Naive thymus-derived CD4-positive, alpha-beta T cell (primary cell): ENCODE measurements at regions of chr3 and their contacts with region 1.

Region 1: DNA sequence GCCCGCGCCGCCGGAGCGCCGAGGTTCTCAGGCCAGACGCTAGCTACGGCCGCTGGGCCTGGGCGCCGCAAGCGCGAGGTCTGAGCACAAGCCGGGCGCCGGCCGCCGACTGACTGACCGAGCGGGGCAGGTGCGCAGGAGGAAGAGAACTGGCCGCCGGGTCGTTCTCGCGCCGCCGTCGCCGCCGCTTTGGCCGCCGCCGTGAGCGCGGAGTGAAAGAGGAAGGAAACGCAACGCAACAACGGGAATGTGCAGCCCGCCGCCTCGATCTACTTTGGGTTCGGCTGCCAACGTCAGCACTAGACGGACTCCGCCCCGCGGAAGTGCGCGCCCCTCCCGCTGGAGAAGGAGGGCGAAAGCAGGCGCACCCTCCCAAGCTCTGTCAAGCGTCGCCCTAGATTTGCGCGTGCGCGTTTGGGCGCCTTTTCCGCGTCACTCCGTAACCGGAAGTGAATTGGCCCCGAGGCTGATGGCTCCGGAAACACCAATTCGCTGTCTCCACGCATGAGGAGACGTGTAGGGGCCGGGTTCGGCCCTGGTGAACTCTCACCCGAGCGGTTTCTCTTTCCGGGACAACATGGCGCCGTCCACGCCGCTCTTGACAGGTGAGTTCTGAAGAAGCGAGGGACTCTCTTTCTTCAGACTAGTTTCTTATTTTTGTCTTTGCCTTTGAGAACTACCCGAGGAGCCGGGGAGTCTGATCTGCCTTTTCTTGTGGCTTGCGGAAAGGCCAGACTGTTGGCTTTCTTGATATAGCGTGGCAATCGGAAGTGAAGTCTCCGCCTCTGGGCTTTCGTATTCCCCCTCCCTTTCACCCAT is at the starts of genes EIF2A and SERP1:
- DNase-seq: peak; percentile 97 to 100 (median 100)
- ATAC-seq: peak; percentile 94
- H3K4me3 ChIP-seq: peak within 1 kb of the TSS; percentile 78
- H3K4me3 Mint-ChIP-seq: peak within 1 kb of the TSS; percentile 88 to 99 (median 96)
- H3K27ac ChIP-seq: peak within 1 kb of the TSS; percentile 96
- H3K27ac Mint-ChIP-seq: peak within 1 kb of the TSS; percentile 93 to 100 (median 98)
- H3K4me1 ChIP-seq: peaks cover 15 to 23% of the 10 kb centered on the region in 2 donors
- H3K4me1 Mint-ChIP-seq: peaks cover 34 to 84% (median 79%) of the 10 kb centered on the region in 7 donors
- H3K27me3 ChIP-seq: no peaks in the 10 kb centered on the region
- H3K27me3 Mint-ChIP-seq: no peaks in the 10 kb centered on the region
- total RNA-seq, gene EIF2A: 94.7 to 135 (median 105) TPM
- total RNA-seq, gene SERP1: 89.4 to 120 (median 115) TPM

Region 2: DNA sequence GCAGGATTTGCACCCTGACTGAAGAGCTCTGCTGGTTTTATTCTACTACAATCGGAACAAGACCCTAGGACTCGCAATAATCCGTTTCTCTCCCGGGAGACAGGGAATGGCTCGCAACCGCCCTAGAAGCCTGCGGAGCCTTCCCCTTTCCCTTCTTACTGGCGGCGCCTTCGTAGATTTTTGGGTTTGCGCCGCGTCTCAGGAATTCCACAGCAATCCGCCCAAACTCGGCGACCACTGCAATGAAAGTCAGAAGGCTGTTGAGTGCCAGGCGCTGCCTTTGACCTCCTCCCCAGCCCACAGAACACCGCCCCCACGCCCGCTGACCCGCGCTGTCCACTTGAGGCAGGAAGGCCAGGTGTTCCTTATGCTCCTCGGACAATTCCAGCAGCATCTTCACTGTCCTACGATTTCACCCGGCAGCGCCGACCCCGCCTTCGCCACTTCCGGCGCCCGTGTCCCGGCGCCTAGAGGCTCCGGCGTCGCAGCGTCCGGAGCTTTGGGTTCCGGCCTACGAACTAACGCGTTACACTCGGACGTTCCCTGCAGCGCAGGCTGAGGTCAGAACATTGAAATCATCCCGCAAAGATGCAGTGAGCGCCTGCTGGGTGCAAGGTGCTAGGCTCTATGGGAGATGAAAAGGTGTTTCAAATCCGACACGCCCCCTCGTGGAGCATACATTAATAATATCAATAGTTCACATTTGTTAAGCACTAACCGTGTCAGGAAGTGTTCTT is 794.2 kb before region 1 on chr3 and contains the start of gene COMMD2:
- CTCF ChIA-PET with region 1: no interaction called
- POLR2A ChIA-PET with region 1: no interaction called
- intact Hi-C with region 1: loop called in 1 of 2 experiments (anchors 1 kb)
- DNase-seq: peak; percentile 52 to 76 (median 63)
- ATAC-seq: peak; percentile 91
- H3K4me3 ChIP-seq: peak within 1 kb of the TSS; percentile 81
- H3K4me3 Mint-ChIP-seq: peak within 1 kb of the TSS; percentile 94 to 98 (median 96)
- H3K27ac ChIP-seq: peak within 1 kb of the TSS; percentile 73
- H3K27ac Mint-ChIP-seq: peak within 1 kb of the TSS; percentile 90 to 97 (median 96)
- H3K4me1 ChIP-seq: peaks cover 9 to 20% of the 10 kb centered on the region in 2 donors
- H3K4me1 Mint-ChIP-seq: peaks cover 12 to 56% (median 32%) of the 10 kb centered on the region in 7 donors
- H3K27me3 ChIP-seq: no peaks in the 10 kb centered on the region
- H3K27me3 Mint-ChIP-seq: peaks cover 0 to 2% (median 0%) of the 10 kb centered on the region in 5 donors
- total RNA-seq, gene COMMD2: 29.9 to 44.4 (median 33.4) TPM

Region 3: DNA sequence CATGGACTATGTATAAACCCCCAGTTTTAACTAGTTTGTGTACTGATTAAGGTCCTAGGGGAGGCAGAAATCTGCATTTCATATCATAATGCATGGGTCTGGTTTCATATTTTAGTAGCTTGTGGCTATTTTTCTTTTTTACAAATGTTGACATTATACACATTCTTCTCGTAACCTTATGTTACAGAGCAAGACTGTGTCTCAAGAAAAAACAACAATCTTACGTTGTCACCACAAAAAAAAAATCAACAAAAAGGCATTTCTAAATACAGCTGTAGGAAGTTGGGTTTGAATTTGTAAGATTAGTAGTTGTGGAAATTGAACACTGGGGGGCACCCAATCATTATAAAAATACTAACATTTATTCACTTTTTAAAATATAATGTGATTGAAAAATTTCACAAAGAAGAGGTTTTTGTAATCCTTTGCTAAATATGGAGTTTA is 18.1 kb before region 1 on chr3:
- CTCF ChIA-PET with region 1: no interaction called
- POLR2A ChIA-PET with region 1: interaction called, 10 read pairs
- intact Hi-C with region 1: loop called (anchors 1 kb)
- DNase-seq: peak in 4 of 9 donors; percentile 23 to 37 (median 28)
- ATAC-seq: peak; percentile 42
- H3K4me3 ChIP-seq: no peak overlapping the region
- H3K4me3 Mint-ChIP-seq: no peak overlapping the region
- H3K27ac ChIP-seq: no peak overlapping the region
- H3K27ac Mint-ChIP-seq: no peak overlapping the region
- H3K4me1 ChIP-seq: no peaks in the 10 kb centered on the region
- H3K4me1 Mint-ChIP-seq: peaks cover 0 to 8% (median 5%) of the 10 kb centered on the region in 7 donors
- H3K27me3 ChIP-seq: no peaks in the 10 kb centered on the region
- H3K27me3 Mint-ChIP-seq: peaks cover 0 to 21% (median 0%) of the 10 kb centered on the region in 5 donors

Region 4: DNA sequence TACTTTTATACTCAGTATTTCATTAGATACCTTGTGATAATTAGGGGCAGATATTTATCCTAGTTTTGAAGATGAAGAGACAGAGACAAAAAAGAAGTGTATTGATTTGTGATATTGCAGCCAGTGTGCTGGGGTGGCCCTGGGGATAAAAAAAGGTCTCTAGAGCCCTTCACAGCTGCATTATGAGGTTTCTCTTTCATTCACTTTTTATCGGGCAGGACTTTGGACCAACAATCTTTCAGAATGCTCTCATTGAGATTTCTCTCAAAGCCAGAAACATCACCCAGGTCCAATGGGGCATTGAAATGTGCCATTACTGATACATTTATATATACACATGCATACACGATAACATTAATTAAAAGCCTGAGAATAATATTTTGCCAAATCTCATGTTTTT is 36.2 kb after region 1 on chr3:
- CTCF ChIA-PET with region 1: no interaction called
- POLR2A ChIA-PET with region 1: interaction called, 4 read pairs
- intact Hi-C with region 1: loop called in 1 of 2 experiments (anchors 2 kb)
- DNase-seq: no peak
- ATAC-seq: no peak
- H3K4me3 ChIP-seq: no peak overlapping the region
- H3K4me3 Mint-ChIP-seq: peak overlapping the region in 1 of 10 donors; percentile 20
- H3K27ac ChIP-seq: no peak overlapping the region
- H3K27ac Mint-ChIP-seq: peak overlapping the region in 3 of 9 donors; percentile 5 to 38 (median 25)
- H3K4me1 ChIP-seq: no peaks in the 10 kb centered on the region
- H3K4me1 Mint-ChIP-seq: peaks cover 0 to 19% (median 0%) of the 10 kb centered on the region in 7 donors
- H3K27me3 ChIP-seq: no peaks in the 10 kb centered on the region
- H3K27me3 Mint-ChIP-seq: no peaks in the 10 kb centered on the region

Region 5: GRCh38 chr3:150691414-150692040 is 145.1 kb after region 1 on chr3:
- CTCF ChIA-PET with region 1: no interaction called
- POLR2A ChIA-PET with region 1: no interaction called
- intact Hi-C with region 1: no loop called
- DNase-seq: no peak
- ATAC-seq: no peak
- H3K4me3 ChIP-seq: no peak overlapping the region
- H3K4me3 Mint-ChIP-seq: no peak overlapping the region
- H3K27ac ChIP-seq: no peak overlapping the region
- H3K27ac Mint-ChIP-seq: no peak overlapping the region
- H3K4me1 ChIP-seq: no peaks in the 10 kb centered on the region
- H3K4me1 Mint-ChIP-seq: no peaks in the 10 kb centered on the region
- H3K27me3 ChIP-seq: no peaks in the 10 kb centered on the region
- H3K27me3 Mint-ChIP-seq: peaks cover 0 to 9% (median 0%) of the 10 kb centered on the region in 5 donors

Region 6: GRCh38 chr3:150703299-150704134 is 157.1 kb after region 1 on chr3 and contains the start of gene ERICH6:
- CTCF ChIA-PET with region 1: no interaction called
- POLR2A ChIA-PET with region 1: interaction called, 6 read pairs
- intact Hi-C with region 1: loop called (anchors 1 kb)
- DNase-seq: peak; percentile 59 to 83 (median 71)
- ATAC-seq: peak; percentile 93
- H3K4me3 ChIP-seq: peak within 1 kb of the TSS; percentile 94
- H3K4me3 Mint-ChIP-seq: peak within 1 kb of the TSS; percentile 82 to 98 (median 97)
- H3K27ac ChIP-seq: peak within 1 kb of the TSS; percentile 84
- H3K27ac Mint-ChIP-seq: peak within 1 kb of the TSS; percentile 93 to 100 (median 97)
- H3K4me1 ChIP-seq: peaks cover 4 to 5% of the 10 kb centered on the region in 2 donors
- H3K4me1 Mint-ChIP-seq: peaks cover 11 to 24% (median 20%) of the 10 kb centered on the region in 7 donors
- H3K27me3 ChIP-seq: no peaks in the 10 kb centered on the region
- H3K27me3 Mint-ChIP-seq: peaks cover 0 to 6% (median 0%) of the 10 kb centered on the region in 5 donors
- total RNA-seq, gene ERICH6: 0.24 to 1.4 (median 0.53) TPM

Region 7: DNA sequence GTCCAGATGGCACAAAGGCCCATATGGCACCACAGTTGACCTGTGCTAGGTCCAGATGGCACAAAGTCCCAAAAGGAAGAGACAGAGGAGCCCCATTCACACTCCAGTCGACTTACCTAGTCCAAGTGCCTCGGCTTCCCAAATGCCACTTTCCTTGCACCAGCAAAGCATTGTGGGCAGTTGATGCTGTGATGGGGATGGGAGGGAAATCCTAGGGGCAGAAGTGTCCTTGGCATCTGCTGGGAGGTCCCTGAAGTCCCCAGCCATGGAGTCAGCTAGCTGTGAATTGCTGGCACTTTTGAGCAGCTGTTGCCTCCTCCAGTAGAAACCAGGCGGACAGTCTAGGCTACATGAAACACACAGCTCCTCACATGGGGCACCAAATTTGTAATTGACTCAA is 276.8 kb after region 1 on chr3:
- CTCF ChIA-PET with region 1: no interaction called
- POLR2A ChIA-PET with region 1: no interaction called
- intact Hi-C with region 1: no loop called
- DNase-seq: no peak
- ATAC-seq: no peak
- H3K4me3 ChIP-seq: no peak overlapping the region
- H3K4me3 Mint-ChIP-seq: no peak overlapping the region
- H3K27ac ChIP-seq: no peak overlapping the region
- H3K27ac Mint-ChIP-seq: peak overlapping the region in 1 of 9 donors; percentile 26
- H3K4me1 ChIP-seq: no peaks in the 10 kb centered on the region
- H3K4me1 Mint-ChIP-seq: no peaks in the 10 kb centered on the region
- H3K27me3 ChIP-seq: no peaks in the 10 kb centered on the region
- H3K27me3 Mint-ChIP-seq: peaks cover 0 to 15% (median 4%) of the 10 kb centered on the region in 5 donors

Region 8: GRCh38 chr3:150936693-150937092 is 390.3 kb after region 1 on chr3:
- CTCF ChIA-PET with region 1: no interaction called
- POLR2A ChIA-PET with region 1: no interaction called
- intact Hi-C with region 1: no loop called
- DNase-seq: no peak
- ATAC-seq: no peak
- H3K4me3 ChIP-seq: no peak overlapping the region
- H3K4me3 Mint-ChIP-seq: no peak overlapping the region
- H3K27ac ChIP-seq: no peak overlapping the region
- H3K27ac Mint-ChIP-seq: no peak overlapping the region
- H3K4me1 ChIP-seq: no peaks in the 10 kb centered on the region
- H3K4me1 Mint-ChIP-seq: peaks cover 0 to 2% (median 0%) of the 10 kb centered on the region in 7 donors
- H3K27me3 ChIP-seq: no peaks in the 10 kb centered on the region
- H3K27me3 Mint-ChIP-seq: peaks cover 25 to 42% (median 36%) of the 10 kb centered on the region in 5 donors

Region 9: GRCh38 chr3:151203051-151203420 is 656.6 kb after region 1 on chr3 and contains the start of gene GPR171:
- CTCF ChIA-PET with region 1: no interaction called
- POLR2A ChIA-PET with region 1: no interaction called
- intact Hi-C with region 1: loop called (anchors 1 to 5 kb)
- DNase-seq: peak in 8 of 9 donors; percentile 62 to 88 (median 82)
- ATAC-seq: peak; percentile 95
- H3K4me3 ChIP-seq: peak within 1 kb of the TSS; percentile 79
- H3K4me3 Mint-ChIP-seq: peak within 1 kb of the TSS; percentile 72 to 94 (median 84)
- H3K27ac ChIP-seq: peak within 1 kb of the TSS; percentile 75
- H3K27ac Mint-ChIP-seq: peak within 1 kb of the TSS; percentile 76 to 98 (median 94)
- H3K4me1 ChIP-seq: peaks cover 45 to 57% of the 10 kb centered on the region in 2 donors
- H3K4me1 Mint-ChIP-seq: peaks cover 34 to 82% (median 71%) of the 10 kb centered on the region in 7 donors
- H3K27me3 ChIP-seq: no peaks in the 10 kb centered on the region
- H3K27me3 Mint-ChIP-seq: no peaks in the 10 kb centered on the region
- total RNA-seq, gene GPR171: 16.0 to 251 (median 63.4) TPM

Region 10: GRCh38 chr3:151372063-151372820 is 825.8 kb after region 1 on chr3:
- CTCF ChIA-PET with region 1: no interaction called
- POLR2A ChIA-PET with region 1: no interaction called
- intact Hi-C with region 1: no loop called
- DNase-seq: no peak
- ATAC-seq: no peak
- H3K4me3 ChIP-seq: no peak overlapping the region
- H3K4me3 Mint-ChIP-seq: no peak overlapping the region
- H3K27ac ChIP-seq: no peak overlapping the region
- H3K27ac Mint-ChIP-seq: no peak overlapping the region
- H3K4me1 ChIP-seq: no peaks in the 10 kb centered on the region
- H3K4me1 Mint-ChIP-seq: no peaks in the 10 kb centered on the region
- H3K27me3 ChIP-seq: no peaks in the 10 kb centered on the region
- H3K27me3 Mint-ChIP-seq: peaks cover 0 to 10% (median 0%) of the 10 kb centered on the region in 5 donors